ENCODE measurements at regions of chr11 and their contacts with region 1.

Region 1: GRCh38 chr11:26993965-26994457 is at the start of gene FIBIN:
- DNase-seq: peak; percentile 78
- H3K4me3 Mint-ChIP-seq: peak within 1 kb of the TSS; percentile 77
- H3K27ac Mint-ChIP-seq: peak within 1 kb of the TSS; percentile 73
- H3K4me1 Mint-ChIP-seq: peaks cover 42% of the 10 kb centered on the region
- H3K27me3 Mint-ChIP-seq: no peaks in the 10 kb centered on the region
- CTCF ChIP-seq: no peak
- total RNA-seq, gene FIBIN: 5.0 and 12.5 TPM in 2 replicates

Region 2: DNA sequence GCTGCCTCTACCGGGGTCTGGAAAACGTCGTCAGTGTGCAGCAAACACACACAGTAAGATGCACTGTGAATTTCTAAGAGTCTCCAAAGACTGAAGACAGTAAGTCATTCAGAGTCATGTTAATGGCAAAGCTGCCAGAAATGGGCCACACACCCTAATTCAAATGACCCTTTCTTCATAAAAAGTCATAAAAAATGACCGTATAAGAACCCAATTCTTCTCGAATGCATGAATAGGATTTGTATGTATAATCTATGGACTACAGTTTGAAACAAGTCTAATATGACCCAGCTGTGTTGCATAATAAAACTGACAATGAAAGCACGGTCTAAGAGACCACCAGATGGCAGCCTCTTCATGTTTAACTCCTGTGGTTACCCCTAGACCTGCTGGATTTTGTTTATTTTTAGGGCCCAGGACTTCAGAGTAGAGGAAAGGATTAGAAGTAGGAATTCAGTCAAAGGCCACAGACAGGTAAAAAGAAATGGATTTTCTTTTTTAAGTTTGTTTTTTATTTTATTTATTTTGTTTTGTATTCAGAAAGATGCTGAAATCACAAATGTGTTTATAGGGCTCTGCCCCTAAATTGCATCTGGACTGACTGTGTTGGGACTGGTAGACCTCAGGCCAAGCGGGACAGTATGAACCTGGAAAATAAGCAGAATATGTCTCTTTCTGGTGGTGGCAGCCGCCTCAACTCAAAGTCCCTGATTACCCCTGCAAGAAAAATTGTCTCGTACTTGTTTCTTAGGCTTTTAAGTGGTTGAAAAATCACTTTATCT is 240.1 kb before region 1 on chr11:
- CTCF ChIA-PET with region 1: interaction called, 3 read pairs
- POLR2A ChIA-PET with region 1: interaction called, 3 read pairs
- intact Hi-C with region 1: loop called (anchors 10 kb)
- DNase-seq: peak; percentile 75
- H3K4me3 Mint-ChIP-seq: no peak overlapping the region
- H3K27ac Mint-ChIP-seq: no peak overlapping the region
- H3K4me1 Mint-ChIP-seq: no peaks in the 10 kb centered on the region
- H3K27me3 Mint-ChIP-seq: no peaks in the 10 kb centered on the region
- CTCF ChIP-seq: peak; percentile 84

Region 3: DNA sequence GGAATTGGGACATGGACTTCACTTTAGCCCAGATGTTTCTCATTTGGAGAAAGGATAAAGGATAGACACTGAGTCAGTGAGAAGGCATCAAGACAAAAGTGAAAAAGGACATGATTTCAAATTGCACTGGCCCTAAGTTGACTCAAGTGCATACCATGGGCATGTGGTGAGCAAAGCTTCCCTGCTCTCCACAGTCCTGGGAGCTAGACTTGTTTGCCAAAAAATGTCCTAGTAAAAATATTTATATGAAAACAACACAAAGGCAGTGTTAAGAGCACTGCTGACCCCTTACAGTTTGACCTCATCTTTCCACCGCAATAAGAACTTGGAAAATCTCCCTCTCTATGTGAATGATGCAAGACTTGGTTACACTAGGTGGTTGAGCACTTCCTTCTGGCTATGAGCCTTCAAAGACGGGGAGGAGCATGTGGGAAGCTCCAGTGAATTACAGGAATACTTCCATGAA is 46.6 kb before region 1 on chr11:
- CTCF ChIA-PET with region 1: interaction called, 4 read pairs
- POLR2A ChIA-PET with region 1: interaction called, 16 read pairs
- intact Hi-C with region 1: loop called (anchors 1 kb)
- DNase-seq: peak; percentile 94
- H3K4me3 Mint-ChIP-seq: no peak overlapping the region
- H3K27ac Mint-ChIP-seq: peak overlapping the region; percentile 81
- H3K4me1 Mint-ChIP-seq: peaks cover 51% of the 10 kb centered on the region
- H3K27me3 Mint-ChIP-seq: no peaks in the 10 kb centered on the region
- CTCF ChIP-seq: no peak

Region 4: GRCh38 chr11:27040302-27041115 is 46.5 kb after region 1 on chr11 and contains the start of gene BBOX1:
- CTCF ChIA-PET with region 1: interaction called, 6 read pairs
- POLR2A ChIA-PET with region 1: interaction called, 11 read pairs
- intact Hi-C with region 1: no loop called
- DNase-seq: peak; percentile 92
- H3K4me3 Mint-ChIP-seq: peak within 1 kb of the TSS; percentile 59
- H3K27ac Mint-ChIP-seq: peak within 1 kb of the TSS; percentile 91
- H3K4me1 Mint-ChIP-seq: peaks cover 25% of the 10 kb centered on the region
- H3K27me3 Mint-ChIP-seq: no peaks in the 10 kb centered on the region
- CTCF ChIP-seq: no peak
- total RNA-seq, gene BBOX1: 0.33 TPM in 1 of 2 replicates, not detected in the other

Region 5: GRCh38 chr11:27116684-27117083 is 122.7 kb after region 1 on chr11:
- CTCF ChIA-PET with region 1: no interaction called
- POLR2A ChIA-PET with region 1: no interaction called
- intact Hi-C with region 1: loop called (anchors 10 kb)
- DNase-seq: peak; percentile 4
- H3K4me3 Mint-ChIP-seq: no peak overlapping the region
- H3K27ac Mint-ChIP-seq: no peak overlapping the region
- H3K4me1 Mint-ChIP-seq: peaks cover 15% of the 10 kb centered on the region
- H3K27me3 Mint-ChIP-seq: no peaks in the 10 kb centered on the region
- CTCF ChIP-seq: no peak

Region 6: DNA sequence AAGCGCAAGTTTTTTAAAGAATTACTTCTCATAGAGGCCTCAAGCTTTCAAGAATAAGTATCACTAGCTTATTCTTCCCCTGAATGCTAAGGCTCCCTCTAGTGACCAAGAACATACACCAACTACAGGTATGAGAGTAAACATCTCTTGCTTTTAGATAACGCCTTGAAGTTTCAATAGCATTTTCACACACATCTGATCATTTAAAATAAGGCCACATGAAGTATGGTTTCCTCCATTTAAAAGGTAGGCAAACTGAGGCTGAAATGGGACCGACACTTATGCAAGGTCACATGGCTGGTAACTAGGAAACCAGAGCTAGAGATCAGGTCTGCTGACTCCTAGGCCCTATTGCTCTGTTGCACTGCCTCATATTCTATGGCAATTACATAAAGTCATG is 302.5 kb after region 1 on chr11:
- CTCF ChIA-PET with region 1: no interaction called
- POLR2A ChIA-PET with region 1: no interaction called
- intact Hi-C with region 1: no loop called
- DNase-seq: peak; percentile 69
- H3K4me3 Mint-ChIP-seq: no peak overlapping the region
- H3K27ac Mint-ChIP-seq: no peak overlapping the region
- H3K4me1 Mint-ChIP-seq: peaks cover 3% of the 10 kb centered on the region
- H3K27me3 Mint-ChIP-seq: no peaks in the 10 kb centered on the region
- CTCF ChIP-seq: peak; percentile 56